Caco-2 (cell line): ENCODE measurements at regions of chr7 and their contacts with region 1.

Region 1: GRCh38 chr7:95723592-95724180 is 48.7 kb upstream of the DYNC1I1 start:
- DNase-seq: peak; percentile 58 to 61
- H3K4me3 ChIP-seq: no peak overlapping the region
- H3K4me3 Mint-ChIP-seq: no peak overlapping the region
- H3K27ac Mint-ChIP-seq: no peak overlapping the region
- H3K4me1 ChIP-seq: no peaks in the 10 kb centered on the region
- H3K4me1 Mint-ChIP-seq: no peaks in the 10 kb centered on the region
- H3K27me3 ChIP-seq: no peaks in the 10 kb centered on the region; the same call in 1 of the 2 replicates
- H3K27me3 Mint-ChIP-seq: peaks cover 17% of the 10 kb centered on the region
- CTCF ChIP-seq: peak; percentile 58 to 70

Region 2: DNA sequence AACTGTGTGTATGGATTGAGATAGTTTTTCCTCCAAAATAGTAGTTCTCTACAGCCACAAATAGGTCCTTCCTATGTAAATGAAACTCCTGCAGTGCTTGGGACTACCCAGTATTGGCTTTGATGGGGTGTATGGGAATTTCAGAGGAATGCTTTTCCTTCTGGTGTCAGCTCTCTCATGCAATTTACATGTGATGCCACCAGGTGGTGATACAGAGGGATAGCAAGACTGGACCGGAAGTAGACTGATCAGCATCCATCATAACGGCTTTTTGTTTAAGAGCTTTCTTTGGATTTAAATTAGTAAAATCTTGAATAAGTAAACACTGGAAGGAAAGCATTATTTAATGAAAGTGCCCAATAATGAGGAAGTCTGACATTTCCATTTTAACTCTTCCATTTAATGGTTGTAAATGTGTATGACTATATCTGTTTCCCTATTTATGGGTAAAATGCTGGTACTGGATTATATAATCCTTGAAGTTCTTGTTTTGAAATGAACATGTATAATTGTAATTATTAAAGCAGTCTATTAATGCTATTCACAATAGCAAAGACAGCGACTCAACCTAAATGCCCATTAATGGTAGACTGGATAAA is 71.3 kb after region 1 on chr7:
- CTCF ChIA-PET with region 1: interaction called, 11 read pairs
- POLR2A ChIA-PET with region 1: no interaction called
- intact Hi-C with region 1: loop called (anchors 1 kb)
- DNase-seq: peak in 1 of 2 experiments; percentile 37
- H3K4me3 ChIP-seq: no peak overlapping the region
- H3K4me3 Mint-ChIP-seq: no peak overlapping the region
- H3K27ac Mint-ChIP-seq: no peak overlapping the region
- H3K4me1 ChIP-seq: no peaks in the 10 kb centered on the region
- H3K4me1 Mint-ChIP-seq: no peaks in the 10 kb centered on the region
- H3K27me3 ChIP-seq: no peaks in the 10 kb centered on the region
- H3K27me3 Mint-ChIP-seq: peaks cover 13% of the 10 kb centered on the region
- CTCF ChIP-seq: peak; percentile 51 to 60